ENCODE measurements at regions of chr17 and their contacts with region 1.

Region 1: DNA sequence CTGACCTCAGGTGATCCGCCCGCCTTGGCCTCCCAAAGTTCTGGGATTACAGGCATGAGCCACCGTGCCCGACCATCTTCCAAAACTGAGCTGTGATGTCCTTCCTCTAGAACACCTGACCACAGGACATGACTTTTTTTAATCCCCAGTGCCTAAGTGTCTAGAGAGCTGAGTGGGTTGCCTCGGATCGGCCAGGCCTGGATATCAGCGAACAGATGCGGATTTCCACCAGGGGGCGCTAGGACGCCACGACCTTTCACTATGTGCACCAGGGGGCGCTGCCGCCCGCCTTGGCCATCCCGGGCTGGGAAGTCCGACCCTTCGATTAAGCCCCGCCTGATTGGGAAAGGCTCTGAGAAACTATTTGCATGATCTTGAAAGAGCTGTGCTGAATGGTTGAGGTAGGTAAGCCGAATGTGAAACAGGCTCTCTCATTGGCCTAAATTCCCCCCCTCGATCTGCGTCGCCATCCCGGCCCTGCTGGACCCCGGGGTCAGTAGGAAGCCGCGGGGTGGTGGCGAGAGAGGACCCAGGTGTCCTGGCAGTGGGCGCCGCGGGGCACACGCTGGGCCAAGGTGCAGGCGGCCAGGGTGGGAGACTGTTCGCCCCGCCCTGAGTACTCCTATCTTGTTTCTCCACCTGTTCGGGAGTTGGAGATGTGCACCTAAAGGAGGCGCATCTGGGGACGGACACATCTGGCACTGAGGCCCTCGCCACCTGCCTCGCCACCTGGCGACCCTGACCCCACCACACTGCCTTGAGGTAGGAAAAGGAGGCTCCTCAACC is at the start of gene ACBD4:
- DNase-seq: peak; percentile 95 to 98 (median 96)
- H3K4me3 ChIP-seq: peak within 1 kb of the TSS; percentile 78
- H3K4me3 Mint-ChIP-seq: peak within 1 kb of the TSS; percentile 87 to 95 (median 89)
- H3K27ac ChIP-seq: peak within 1 kb of the TSS; percentile 43
- H3K27ac Mint-ChIP-seq: peak within 1 kb of the TSS; percentile 66 to 86 (median 83)
- H3K4me1 ChIP-seq: peaks cover 14% of the 10 kb centered on the region
- H3K4me1 Mint-ChIP-seq: peaks cover 15 to 35% (median 20%) of the 10 kb centered on the region in 3 donors
- H3K27me3 ChIP-seq: no peaks in the 10 kb centered on the region
- H3K27me3 Mint-ChIP-seq: peaks cover 0 to 4% of the 10 kb centered on the region in 2 donors
- total RNA-seq, gene ACBD4: 8.8 to 9.7 TPM

Region 2: DNA sequence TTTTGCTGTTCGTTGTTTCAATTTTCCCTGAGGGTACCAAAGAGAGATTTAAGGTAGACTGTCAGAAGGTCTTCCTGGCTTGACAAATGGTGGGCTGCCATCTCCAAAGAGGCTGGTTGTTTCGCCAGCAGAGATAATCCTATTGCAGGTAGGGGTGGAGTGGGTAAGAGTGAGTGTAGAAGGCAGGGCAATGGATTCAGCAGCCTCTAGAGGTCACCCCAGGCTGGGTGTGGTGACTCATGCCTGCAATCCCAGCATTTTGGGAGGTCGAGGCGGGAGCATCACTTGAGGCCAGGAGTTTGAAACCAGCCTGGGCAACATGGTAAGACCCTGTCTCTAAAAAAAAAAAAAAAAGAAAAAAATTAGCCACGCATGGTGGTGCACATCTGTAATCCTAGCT is 118.6 kb before region 1 on chr17:
- CTCF ChIA-PET with region 1: no interaction called
- POLR2A ChIA-PET with region 1: no interaction called
- DNase-seq: no peak
- H3K4me3 ChIP-seq: no peak overlapping the region
- H3K4me3 Mint-ChIP-seq: no peak overlapping the region
- H3K27ac ChIP-seq: no peak overlapping the region
- H3K27ac Mint-ChIP-seq: peak overlapping the region in 1 of 8 donors; percentile 80
- H3K4me1 ChIP-seq: peaks cover 13% of the 10 kb centered on the region
- H3K4me1 Mint-ChIP-seq: peaks cover 13 to 21% (median 21%) of the 10 kb centered on the region in 3 donors
- H3K27me3 ChIP-seq: peaks cover 32% of the 10 kb centered on the region
- H3K27me3 Mint-ChIP-seq: peaks cover 22 to 46% of the 10 kb centered on the region in 2 donors

Region 3: DNA sequence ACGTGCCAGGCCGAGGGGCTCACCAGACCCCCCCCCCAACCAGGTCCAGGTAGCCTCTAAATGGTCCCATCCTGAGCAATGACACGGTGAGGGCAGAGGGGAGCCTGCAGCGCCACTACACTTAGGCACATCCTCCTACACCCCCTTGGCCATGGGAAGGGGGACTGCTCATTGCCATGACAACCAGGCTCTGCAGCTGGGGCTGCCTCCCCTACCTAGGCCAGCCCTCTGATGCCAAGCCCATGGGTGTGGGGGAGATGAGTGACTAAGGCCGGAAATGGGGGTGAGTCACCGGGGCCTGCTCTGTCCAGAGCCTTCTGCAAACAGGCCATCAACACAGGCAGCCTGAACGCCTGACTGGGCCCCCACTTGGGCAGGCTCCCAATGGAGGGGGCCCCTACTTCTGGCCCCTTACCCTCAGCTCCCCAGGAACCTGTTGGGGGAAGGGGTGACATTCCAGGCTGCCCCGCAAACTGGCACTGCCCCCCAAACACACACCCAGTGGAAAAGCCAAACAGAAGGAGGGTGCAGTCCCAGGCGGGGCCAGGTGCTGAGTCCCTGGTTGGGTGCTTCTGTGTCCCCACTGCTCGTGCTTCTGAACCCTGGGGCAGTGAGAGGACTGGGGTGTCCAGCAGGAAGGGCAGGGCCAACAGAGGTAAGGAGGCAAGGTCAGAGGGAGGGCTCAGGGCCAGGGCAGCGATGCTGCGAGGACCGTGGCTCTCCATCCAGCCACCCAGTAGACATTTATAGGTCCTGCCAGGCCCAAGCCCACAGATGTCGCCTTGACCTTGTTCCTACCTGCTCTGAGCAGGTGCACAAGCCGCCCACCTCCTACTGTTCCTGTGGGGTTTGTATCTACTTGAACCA is 11.2 kb before region 1 on chr17:
- CTCF ChIA-PET with region 1: interaction called, 11 read pairs
- POLR2A ChIA-PET with region 1: no interaction called
- DNase-seq: peak in 1 of 5 donors; percentile 68
- H3K4me3 ChIP-seq: no peak overlapping the region
- H3K4me3 Mint-ChIP-seq: no peak overlapping the region
- H3K27ac ChIP-seq: no peak overlapping the region
- H3K27ac Mint-ChIP-seq: peak overlapping the region in 1 of 8 donors; percentile 55
- H3K4me1 ChIP-seq: no peaks in the 10 kb centered on the region
- H3K4me1 Mint-ChIP-seq: peaks cover 0 to 3% (median 0%) of the 10 kb centered on the region in 3 donors
- H3K27me3 ChIP-seq: no peaks in the 10 kb centered on the region
- H3K27me3 Mint-ChIP-seq: no peaks in the 10 kb centered on the region

Region 4: GRCh38 chr17:45161019-45161825 is 25.8 kb after region 1 on chr17:
- CTCF ChIA-PET with region 1: interaction called, 96 read pairs
- POLR2A ChIA-PET with region 1: interaction called, 21 read pairs
- DNase-seq: peak; percentile 91 to 99 (median 99)
- H3K4me3 ChIP-seq: peak overlapping the region; percentile 67
- H3K4me3 Mint-ChIP-seq: peak overlapping the region; percentile 92 to 99 (median 94)
- H3K27ac ChIP-seq: peak overlapping the region; percentile 96
- H3K27ac Mint-ChIP-seq: peak overlapping the region; percentile 89 to 99 (median 97)
- H3K4me1 ChIP-seq: peaks cover 27% of the 10 kb centered on the region
- H3K4me1 Mint-ChIP-seq: peaks cover 31 to 51% (median 51%) of the 10 kb centered on the region in 3 donors
- H3K27me3 ChIP-seq: no peaks in the 10 kb centered on the region
- H3K27me3 Mint-ChIP-seq: peaks cover 0 to 2% of the 10 kb centered on the region in 2 donors

Region 5: DNA sequence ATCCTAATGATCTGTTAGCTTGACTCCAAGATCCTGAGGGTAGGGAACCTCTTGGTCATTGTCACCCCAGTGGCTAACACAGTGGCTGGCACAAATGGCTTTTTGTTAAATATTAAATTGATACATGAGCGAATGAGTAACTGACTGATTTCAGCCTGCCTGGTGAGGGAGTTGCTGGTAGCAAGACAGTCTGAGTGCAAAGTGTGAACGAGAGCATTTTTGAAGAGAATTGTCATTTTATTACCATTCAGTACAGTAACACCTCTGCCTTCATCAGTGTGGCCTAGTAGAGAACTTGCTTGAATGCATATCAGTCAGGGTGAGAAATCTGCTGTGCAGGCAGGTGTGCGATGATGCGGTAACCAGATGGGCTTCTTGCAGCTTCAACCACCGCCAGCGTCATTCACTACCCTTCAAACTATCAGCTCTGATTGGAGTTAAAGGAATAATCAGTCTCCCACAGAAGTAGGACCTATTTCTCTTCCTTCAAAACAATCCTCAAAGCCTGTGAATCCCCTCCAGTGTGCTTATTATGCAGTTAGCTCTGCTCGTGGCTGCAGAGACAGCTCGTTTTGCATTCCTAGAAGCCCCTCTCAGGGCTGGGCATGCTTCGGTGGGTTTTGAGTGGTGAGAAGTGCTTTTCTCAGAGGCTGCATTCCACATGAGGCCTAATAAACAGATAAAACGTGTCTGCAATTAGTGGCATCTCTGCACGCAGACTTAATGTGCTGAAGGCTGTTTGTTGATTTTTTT is 55.3 kb after region 1 on chr17:
- CTCF ChIA-PET with region 1: interaction called, 199 read pairs
- POLR2A ChIA-PET with region 1: interaction called, 6 read pairs
- DNase-seq: no peak
- H3K4me3 ChIP-seq: no peak overlapping the region
- H3K4me3 Mint-ChIP-seq: no peak overlapping the region
- H3K27ac ChIP-seq: no peak overlapping the region
- H3K27ac Mint-ChIP-seq: peak overlapping the region in 1 of 8 donors; percentile 37
- H3K4me1 ChIP-seq: no peaks in the 10 kb centered on the region
- H3K4me1 Mint-ChIP-seq: no peaks in the 10 kb centered on the region
- H3K27me3 ChIP-seq: no peaks in the 10 kb centered on the region
- H3K27me3 Mint-ChIP-seq: no peaks in the 10 kb centered on the region

Region 6: GRCh38 chr17:45228763-45229539 is 93.6 kb after region 1 on chr17:
- CTCF ChIA-PET with region 1: interaction called, 21 read pairs
- POLR2A ChIA-PET with region 1: interaction called, 4 read pairs
- DNase-seq: peak; percentile 78 to 91 (median 85)
- H3K4me3 ChIP-seq: peak overlapping the region; percentile 95
- H3K4me3 Mint-ChIP-seq: peak overlapping the region; percentile 96 to 100 (median 99)
- H3K27ac ChIP-seq: peak overlapping the region; percentile 98
- H3K27ac Mint-ChIP-seq: peak overlapping the region; percentile 97 to 100 (median 100)
- H3K4me1 ChIP-seq: peaks cover 75% of the 10 kb centered on the region
- H3K4me1 Mint-ChIP-seq: peaks cover 80 to 90% (median 83%) of the 10 kb centered on the region in 3 donors
- H3K27me3 ChIP-seq: no peaks in the 10 kb centered on the region
- H3K27me3 Mint-ChIP-seq: peaks cover 0 to 3% of the 10 kb centered on the region in 2 donors

Region 7: DNA sequence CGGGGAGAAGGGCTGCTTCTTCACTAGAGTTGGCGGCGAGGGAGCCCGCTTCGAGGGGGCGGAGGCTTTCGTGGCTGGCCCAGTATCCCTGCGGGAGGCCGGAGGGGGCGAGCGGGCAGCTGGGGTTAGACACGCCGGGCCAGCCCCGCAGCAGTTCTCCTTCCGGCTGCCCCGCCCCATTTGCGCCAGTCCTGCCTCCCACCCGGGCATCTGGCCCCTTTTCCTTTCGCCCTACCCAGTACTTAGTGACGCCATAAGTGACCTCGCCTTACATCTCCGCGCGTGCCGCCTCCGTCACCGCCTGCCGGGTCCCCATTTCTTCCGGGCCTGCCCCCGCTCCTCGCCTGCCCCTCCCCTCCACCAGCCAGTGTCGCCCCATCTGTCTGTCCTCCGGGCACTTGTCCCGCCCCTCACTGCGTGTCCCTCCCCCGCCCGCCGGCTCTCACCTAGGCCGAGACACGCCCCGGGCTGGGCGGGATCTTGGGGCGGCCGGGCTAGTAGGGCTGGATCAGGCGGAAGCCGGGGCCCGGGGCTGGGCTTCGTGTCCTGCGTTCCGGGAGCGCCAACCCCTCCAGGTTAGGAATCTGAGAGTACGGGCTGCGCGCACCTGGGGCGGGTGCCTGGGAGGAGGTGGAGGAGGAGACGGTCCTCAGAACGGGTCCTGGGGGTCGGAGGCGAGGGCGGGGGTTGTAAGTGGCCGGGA is 112.2 kb after region 1 on chr17:
- CTCF ChIA-PET with region 1: interaction called, 10 read pairs
- POLR2A ChIA-PET with region 1: no interaction called
- DNase-seq: peak; percentile 92 to 99 (median 98)
- H3K4me3 ChIP-seq: peak overlapping the region; percentile 69
- H3K4me3 Mint-ChIP-seq: peak overlapping the region; percentile 85 to 94 (median 88)
- H3K27ac ChIP-seq: peak overlapping the region; percentile 90
- H3K27ac Mint-ChIP-seq: peak overlapping the region; percentile 93 to 100 (median 97)
- H3K4me1 ChIP-seq: peaks cover 56% of the 10 kb centered on the region
- H3K4me1 Mint-ChIP-seq: peaks cover 31 to 71% (median 40%) of the 10 kb centered on the region in 3 donors
- H3K27me3 ChIP-seq: no peaks in the 10 kb centered on the region
- H3K27me3 Mint-ChIP-seq: no peaks in the 10 kb centered on the region

Region 8: DNA sequence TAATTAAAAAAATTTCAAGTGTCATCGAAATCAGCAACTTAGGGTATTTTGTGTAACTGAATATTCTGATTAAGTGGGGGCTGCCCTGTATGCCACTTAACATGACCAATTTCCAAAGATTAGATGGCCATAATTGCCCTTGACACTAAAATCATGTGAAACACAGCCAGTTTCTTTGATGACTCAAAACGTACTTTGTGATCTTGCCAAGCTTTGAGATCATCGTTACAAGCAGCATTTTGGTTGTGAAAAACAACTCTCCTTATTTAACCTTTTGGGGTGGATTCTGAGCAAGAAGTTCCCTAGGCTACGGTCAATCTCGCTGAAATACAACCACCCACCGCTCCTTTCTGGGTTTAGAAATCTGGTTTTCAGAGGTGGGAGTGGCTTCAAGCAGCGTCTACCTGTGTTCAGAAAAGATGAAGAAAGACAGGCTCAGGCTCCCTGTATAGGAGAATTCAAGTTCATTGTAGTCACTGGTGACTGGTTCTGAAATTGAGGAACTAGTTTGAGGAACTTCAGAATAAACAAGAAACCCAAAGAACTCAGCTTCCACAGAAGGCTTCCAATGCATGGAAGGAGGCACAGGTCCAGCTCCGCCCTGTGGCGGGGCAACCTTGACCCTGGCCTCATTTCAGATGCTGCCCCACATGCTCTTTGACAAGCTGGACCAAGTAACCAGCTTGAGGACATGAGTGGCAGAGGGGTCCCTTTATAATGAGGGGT is 172.1 kb after region 1 on chr17:
- CTCF ChIA-PET with region 1: interaction called, 12 read pairs
- POLR2A ChIA-PET with region 1: no interaction called
- DNase-seq: peak in 1 of 5 donors; percentile 29
- H3K4me3 ChIP-seq: no peak overlapping the region
- H3K4me3 Mint-ChIP-seq: peak overlapping the region in 4 of 7 donors; percentile 29 to 60 (median 35)
- H3K27ac ChIP-seq: no peak overlapping the region
- H3K27ac Mint-ChIP-seq: peak overlapping the region in 7 of 8 donors; percentile 43 to 83 (median 78)
- H3K4me1 ChIP-seq: peaks cover 72% of the 10 kb centered on the region
- H3K4me1 Mint-ChIP-seq: peaks cover 73 to 88% (median 86%) of the 10 kb centered on the region in 3 donors
- H3K27me3 ChIP-seq: no peaks in the 10 kb centered on the region
- H3K27me3 Mint-ChIP-seq: no peaks in the 10 kb centered on the region